AG04450 (cell line): ENCODE measurements at regions of chr5 and their contacts with region 1.

Region 1: DNA sequence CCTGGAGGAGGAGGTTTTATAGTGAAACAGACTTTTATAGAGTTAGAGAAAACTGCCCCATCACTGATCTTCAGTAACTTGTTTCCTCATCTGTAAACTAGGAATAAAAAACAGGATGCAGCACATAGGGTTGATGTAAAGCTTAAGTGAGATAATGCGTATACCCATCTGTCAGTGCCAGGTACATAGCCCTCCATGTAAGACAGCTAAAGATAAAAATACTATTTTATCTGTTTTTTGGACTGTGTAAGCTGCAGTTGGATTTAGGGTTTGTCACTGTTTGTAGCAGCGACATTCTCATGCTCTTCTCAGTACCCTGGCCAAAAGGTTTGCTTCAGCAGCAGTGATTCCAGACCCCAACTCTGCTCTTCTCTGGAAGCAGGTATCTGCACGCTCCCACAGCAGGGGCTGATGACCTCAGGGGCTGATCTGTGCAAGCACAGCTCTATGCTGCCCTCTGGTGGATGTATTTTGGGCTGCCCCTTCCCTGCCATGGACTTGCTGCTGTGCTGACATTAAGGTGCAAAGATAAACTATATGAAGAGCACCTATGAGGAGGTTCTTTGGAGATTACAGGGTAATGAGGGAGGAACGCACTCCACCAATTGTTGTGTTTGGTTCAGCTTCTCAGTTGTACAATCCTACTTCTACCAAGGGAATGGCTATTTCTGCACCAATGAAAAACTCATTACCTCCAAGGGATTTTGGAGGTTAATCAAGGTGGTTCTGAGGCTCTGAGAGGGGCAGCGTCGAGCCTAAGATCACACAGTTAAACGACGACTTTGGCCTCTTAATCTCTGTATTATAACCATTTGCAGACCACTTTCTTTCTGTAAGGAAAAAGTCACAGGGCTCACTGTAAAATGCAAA is 13.1 kb downstream of the HMHB1 start:
- DNase-seq: peak; percentile 45
- H3K4me3 ChIP-seq: no peak overlapping the region
- H3K27ac ChIP-seq: no peak overlapping the region
- H3K27me3 ChIP-seq: no peaks in the 10 kb centered on the region
- CTCF ChIP-seq: peak; percentile 99

Region 2: DNA sequence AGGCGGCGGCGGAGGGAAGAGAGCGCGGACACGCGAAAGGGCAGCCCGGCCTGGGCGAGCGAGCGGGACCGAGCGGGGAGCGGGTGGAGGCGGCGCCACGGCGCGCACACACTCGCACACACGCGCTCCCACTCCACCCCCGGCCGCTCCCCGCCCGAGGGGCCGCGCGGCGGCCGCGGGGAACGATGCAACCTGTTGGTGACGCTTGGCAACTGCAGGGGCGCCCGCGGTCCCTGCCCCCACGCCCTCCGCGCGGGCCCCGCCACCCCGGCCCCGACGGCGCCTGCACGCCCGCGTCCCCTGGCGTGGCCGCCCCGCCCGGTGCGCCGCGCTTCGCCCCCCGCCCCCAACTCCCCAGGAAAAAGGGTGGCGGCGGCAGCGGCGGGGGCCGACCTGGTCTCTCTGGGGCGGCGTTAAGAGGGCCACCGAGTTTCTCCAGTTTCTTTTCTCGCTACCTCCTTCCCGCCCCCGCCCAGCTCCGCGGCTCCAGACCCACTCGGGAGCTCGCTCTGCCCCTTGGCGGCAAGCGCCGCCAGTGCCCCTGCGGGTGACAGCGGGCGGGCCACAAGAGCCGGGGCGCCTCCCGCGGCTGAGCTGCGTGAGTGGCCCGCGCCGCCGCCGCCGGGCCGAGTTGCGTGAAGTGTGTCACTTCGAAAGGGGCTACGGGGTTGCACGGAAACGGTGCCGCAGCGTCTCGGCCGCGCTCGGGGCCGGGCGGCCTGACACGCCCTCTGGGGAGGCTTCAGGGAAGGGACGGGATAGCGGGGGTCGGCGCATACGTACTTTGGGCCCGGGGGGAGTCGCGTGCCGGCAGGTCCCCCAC is 421.3 kb before region 1 on chr5 and contains the start of gene NR3C1:
- CTCF ChIA-PET with region 1: interaction called, 10 read pairs
- POLR2A ChIA-PET with region 1: interaction called, 4 read pairs
- DNase-seq: peak; percentile 44
- H3K4me3 ChIP-seq: peak within 1 kb of the TSS; percentile 70
- H3K27ac ChIP-seq: peak within 1 kb of the TSS; percentile 77
- H3K27me3 ChIP-seq: no peaks in the 10 kb centered on the region
- CTCF ChIP-seq: peak; percentile 48
- polyA plus RNA-seq, gene NR3C1: 34.7 and 44.1 TPM in 2 replicates

Region 3: GRCh38 chr5:143721925-143722324 is 103.2 kb before region 1 on chr5:
- CTCF ChIA-PET with region 1: no interaction called
- POLR2A ChIA-PET with region 1: no interaction called
- DNase-seq: no peak
- H3K4me3 ChIP-seq: no peak overlapping the region
- H3K27ac ChIP-seq: no peak overlapping the region
- H3K27me3 ChIP-seq: no peaks in the 10 kb centered on the region
- CTCF ChIP-seq: no peak

Region 4: DNA sequence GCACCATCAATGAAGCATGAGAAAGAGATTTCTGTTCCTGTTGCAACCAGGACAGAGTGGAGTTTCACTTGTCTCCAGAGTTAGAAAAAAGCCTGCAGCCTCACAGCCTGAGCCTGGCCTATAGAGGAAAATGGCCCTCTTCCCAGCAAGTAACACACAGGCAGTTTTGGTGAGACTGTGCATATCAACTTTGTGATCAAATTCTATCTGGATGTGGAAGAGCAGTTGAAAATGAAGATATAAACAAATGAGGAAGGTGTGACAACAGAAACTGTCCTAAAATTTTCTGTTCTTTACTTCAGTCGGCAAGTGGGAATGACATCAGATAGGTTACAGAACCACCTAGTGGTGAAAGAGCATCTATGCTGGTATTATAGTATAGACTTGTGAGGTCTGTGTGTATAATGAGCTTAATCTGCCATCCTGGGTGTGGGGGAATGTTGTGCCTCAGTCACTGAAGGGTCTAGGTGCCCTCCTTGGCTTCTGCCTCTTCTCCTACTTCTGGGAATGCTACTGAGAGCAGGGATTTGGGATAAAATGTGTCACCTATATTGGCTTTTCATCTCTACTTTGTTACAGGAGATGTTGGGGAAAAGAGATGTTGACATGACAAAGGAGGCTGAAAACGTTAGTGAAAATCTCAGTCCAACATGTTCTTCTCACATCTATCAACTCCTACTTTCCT is 317.2 kb after region 1 on chr5:
- CTCF ChIA-PET with region 1: interaction called, 13 read pairs
- POLR2A ChIA-PET with region 1: no interaction called
- DNase-seq: peak; percentile 7
- H3K4me3 ChIP-seq: no peak overlapping the region
- H3K27ac ChIP-seq: no peak overlapping the region
- H3K27me3 ChIP-seq: no peaks in the 10 kb centered on the region
- CTCF ChIP-seq: peak; percentile 78